IMR-90 (cell line): ENCODE measurements at regions of chr21 and their contacts with region 1.

Region 1: DNA sequence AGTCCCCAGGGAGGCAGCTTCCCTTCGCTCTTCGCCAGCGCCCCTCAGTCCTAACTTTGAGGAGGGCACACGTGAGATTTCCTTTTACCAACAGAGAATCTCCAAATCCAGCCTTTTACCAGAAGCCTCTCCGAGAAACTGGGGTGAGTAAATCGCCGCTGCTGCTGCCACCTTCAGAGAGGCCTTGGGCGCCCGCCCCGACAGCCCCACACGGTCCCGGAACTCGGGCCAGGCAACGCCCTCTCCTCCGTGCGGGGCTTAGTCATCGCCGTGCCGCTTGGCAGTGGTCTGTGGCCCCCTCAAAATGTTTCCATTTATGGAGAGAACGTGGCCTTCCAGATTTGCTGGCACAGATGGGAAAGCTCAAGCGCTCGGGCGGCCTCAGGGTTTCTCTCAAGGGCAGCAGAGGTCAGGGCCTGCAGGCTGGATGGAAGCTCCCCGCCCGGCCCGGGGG is 41.4 kb upstream of the COL6A2 start:
- DNase-seq: peak; percentile 94
- ATAC-seq: peak; percentile 80
- H3K4me3 ChIP-seq: peak overlapping the region; percentile 14; the same call in 1 of the 2 replicates
- H3K27ac ChIP-seq: peak overlapping the region; percentile 99
- H3K4me1 ChIP-seq: peaks cover 43% of the 10 kb centered on the region
- H3K27me3 ChIP-seq: no peaks in the 10 kb centered on the region
- CTCF ChIP-seq: no peak
- POLR2A ChIP-seq: peak; percentile 77
- RAD21 ChIP-seq: peak; percentile 24; the same call in 1 of the 2 replicates

Region 2: GRCh38 chr21:45130324-45130774 is 926.1 kb before region 1 on chr21:
- CTCF ChIA-PET with region 1: no interaction called
- POLR2A ChIA-PET with region 1: no interaction called
- dilution Hi-C with region 1: no loop called
- in situ Hi-C with region 1: no loop called
- intact Hi-C with region 1: no loop called
- DNase-seq: peak; percentile 84
- ATAC-seq: peak; percentile 82
- H3K4me3 ChIP-seq: peak overlapping the region; percentile 31
- H3K27ac ChIP-seq: peak overlapping the region; percentile 56
- H3K4me1 ChIP-seq: peaks cover 24% of the 10 kb centered on the region
- H3K27me3 ChIP-seq: no peaks in the 10 kb centered on the region
- CTCF ChIP-seq: no peak
- POLR2A ChIP-seq: no peak
- RAD21 ChIP-seq: no peak

Region 3: DNA sequence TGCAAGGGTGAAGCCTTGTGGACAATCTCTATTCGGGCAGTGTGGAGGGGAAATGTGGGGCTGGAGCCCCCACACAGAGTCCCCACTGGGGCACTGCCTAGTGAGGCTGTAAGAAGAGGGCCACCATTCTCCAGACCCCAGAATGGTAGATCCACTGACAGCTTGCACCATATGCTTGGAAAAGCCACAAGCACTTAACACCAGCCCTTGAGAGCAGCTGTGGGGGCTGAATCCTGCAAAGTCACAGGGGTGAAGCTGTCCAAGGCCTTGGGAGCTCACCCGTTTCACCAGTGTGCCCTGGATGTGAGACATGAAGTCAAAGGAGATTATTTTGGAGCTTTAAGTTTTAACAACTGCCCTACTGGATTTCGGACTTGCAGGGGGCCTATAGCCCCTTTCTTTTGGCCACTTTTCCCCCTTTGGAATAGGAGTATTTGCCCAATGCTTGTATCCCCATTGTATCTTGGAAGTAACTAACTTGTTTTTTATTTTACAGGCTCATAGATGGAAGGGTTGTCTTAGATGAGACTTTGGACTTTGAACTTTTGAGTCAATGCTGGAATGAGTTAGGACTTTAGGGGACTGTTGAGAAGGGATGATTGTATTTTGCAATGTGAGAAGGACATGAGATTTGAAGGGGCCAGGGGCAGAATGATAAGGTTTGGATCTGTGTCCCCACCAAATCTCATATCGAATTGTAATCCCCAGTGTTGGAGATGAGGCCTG is 91.2 kb before region 1 on chr21:
- CTCF ChIA-PET with region 1: no interaction called
- POLR2A ChIA-PET with region 1: no interaction called
- dilution Hi-C with region 1: no loop called
- in situ Hi-C with region 1: no loop called
- intact Hi-C with region 1: no loop called
- DNase-seq: no peak
- ATAC-seq: no peak
- H3K4me3 ChIP-seq: no peak overlapping the region
- H3K27ac ChIP-seq: no peak overlapping the region
- H3K4me1 ChIP-seq: no peaks in the 10 kb centered on the region
- H3K27me3 ChIP-seq: no peaks in the 10 kb centered on the region
- CTCF ChIP-seq: no peak
- POLR2A ChIP-seq: no peak
- RAD21 ChIP-seq: no peak

Region 4: DNA sequence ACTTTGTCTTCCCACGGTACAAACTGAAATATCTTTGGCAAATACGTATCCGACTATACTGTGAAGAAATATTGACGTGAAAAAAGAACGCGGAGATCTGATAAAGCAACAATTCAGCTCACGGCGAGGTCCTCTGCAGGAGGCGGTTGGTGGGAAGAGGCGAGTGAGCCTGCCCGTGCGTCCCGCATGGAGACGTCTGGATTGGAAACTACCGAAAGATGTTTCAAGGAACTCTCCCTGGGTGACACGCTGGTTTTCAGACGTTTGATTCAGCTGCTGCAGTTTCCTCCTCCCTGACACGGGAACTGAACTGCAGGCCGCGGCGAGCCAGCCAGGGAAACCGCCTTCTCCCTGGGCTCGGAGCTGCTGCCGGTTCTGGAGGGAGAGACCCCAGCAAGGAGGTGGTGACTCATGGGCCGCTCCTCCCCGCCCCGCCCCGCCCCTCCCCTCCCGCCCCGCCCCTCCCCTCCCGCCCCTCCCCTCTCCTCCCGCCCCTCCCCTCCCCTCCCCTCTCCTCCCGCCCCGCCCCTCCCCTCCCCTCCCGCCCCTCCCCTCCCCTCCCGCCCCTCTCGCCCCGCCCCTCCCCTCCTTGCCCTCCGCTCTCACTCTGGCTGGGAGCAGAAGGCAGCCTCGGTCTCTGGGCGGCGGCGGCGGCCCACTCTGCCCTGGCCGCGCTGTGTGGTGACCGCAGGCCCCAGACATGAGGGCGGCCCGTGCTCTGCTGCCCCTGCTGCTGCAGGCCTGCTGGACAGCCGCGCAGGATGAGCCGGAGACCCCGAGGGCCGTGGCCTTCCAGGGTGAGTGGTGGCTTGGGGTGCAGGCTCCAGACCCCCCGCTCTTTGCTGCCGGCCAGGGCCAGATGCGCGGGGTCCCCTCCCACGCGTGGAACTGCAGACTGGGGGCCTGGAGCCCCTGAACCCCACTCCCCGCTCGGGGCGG is 75.1 kb before region 1 on chr21 and contains the start of gene COL6A1:
- CTCF ChIA-PET with region 1: interaction called, 3 read pairs
- POLR2A ChIA-PET with region 1: interaction called, 3 read pairs
- dilution Hi-C with region 1: no loop called
- in situ Hi-C with region 1: no loop called
- intact Hi-C with region 1: loop called (anchors 2 kb)
- DNase-seq: peak; percentile 88
- ATAC-seq: peak; percentile 65
- H3K4me3 ChIP-seq: peak within 1 kb of the TSS; percentile 95
- H3K27ac ChIP-seq: peak within 1 kb of the TSS; percentile 99
- H3K4me1 ChIP-seq: peaks cover 29% of the 10 kb centered on the region
- H3K27me3 ChIP-seq: no peaks in the 10 kb centered on the region
- CTCF ChIP-seq: no peak
- POLR2A ChIP-seq: peak; percentile 95
- RAD21 ChIP-seq: 0 out of 2 replicates have a peak, but pooled peaks have one; percentile 23
- total RNA-seq, gene COL6A1: 173 and 186 TPM in 2 replicates